Left cardiac atrium (tissue), 4 donors: ENCODE measurements at regions of chr6 and their contacts with region 1.

Region 1: DNA sequence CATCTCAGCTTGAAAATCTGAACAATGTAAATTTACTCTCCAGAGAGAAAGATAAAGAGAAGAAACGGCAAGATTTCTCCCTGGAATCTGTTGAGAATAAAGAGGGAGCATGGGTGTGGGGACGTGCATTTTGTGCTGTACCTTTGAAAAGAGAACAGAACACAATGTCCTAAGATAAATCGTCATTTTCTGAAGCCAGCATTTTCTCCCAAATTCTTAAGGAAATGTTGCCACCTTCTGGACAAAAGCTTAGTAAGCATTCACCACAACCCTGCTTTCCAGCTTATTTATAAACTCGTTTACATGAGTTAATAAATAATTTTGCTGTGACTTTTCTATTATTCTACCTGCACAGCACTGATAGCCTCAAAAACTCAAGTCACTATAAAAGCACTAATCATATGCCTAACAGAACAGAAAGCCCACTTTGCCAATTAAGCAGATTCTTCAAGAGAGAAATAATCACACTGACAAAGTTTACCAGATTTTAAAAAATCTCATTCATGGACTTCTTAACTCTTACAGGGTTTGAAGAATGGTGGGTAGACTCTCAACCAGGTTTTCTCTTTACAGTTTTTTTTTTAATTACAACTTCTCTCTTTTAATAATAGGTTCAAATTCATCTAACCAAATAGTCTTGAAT is 155.8 kb downstream of the MBOAT1 start:
- DNase-seq: no peak
- ATAC-seq: peak; percentile 8 to 26

Region 2: DNA sequence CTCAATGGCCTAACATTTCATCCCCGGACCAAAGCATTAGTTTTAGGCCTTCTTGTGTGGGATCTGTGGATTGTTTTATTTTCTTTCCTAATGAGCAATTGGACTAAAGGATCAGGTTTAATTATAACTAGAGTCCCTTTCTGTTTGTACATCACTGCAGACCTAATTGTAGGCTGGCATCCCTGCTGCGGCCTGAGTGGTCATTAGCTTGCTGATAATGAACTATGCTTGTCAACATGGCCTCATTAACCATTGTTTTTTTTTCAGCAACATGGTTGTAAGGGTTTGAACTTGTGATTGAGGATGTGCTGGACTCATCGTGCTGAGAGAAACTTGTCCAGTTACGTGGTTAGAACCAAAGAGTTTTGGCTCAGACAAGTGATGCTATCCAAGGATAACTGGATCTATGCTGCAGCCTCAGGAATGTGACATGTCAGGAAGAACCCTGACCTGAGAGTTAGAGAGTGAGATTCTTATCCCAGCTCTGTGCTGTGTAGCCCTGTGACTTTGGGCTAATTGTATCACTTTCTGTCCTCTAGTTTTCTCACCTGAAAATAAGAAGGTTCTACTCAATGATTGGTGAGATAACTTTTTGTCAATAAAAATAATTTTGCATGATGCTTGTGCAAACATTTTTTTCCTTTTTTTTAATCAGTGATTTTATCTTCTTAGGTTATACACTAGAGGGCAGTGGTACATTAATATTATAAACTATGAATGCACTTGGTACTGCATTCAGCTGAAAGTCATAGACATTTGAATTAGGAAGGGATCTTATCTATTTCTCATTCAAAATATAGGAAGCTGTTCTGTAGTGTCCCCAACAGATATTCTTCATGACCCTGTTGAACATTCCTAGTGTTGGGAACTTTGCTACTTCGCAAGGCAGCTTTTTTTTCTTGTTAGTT is 1528.4 kb before region 1 on chr6:
- intact Hi-C with region 1: loop called in 1 of 2 experiments (anchors 5 kb)
- DNase-seq: no peak
- ATAC-seq: no peak

Region 3: DNA sequence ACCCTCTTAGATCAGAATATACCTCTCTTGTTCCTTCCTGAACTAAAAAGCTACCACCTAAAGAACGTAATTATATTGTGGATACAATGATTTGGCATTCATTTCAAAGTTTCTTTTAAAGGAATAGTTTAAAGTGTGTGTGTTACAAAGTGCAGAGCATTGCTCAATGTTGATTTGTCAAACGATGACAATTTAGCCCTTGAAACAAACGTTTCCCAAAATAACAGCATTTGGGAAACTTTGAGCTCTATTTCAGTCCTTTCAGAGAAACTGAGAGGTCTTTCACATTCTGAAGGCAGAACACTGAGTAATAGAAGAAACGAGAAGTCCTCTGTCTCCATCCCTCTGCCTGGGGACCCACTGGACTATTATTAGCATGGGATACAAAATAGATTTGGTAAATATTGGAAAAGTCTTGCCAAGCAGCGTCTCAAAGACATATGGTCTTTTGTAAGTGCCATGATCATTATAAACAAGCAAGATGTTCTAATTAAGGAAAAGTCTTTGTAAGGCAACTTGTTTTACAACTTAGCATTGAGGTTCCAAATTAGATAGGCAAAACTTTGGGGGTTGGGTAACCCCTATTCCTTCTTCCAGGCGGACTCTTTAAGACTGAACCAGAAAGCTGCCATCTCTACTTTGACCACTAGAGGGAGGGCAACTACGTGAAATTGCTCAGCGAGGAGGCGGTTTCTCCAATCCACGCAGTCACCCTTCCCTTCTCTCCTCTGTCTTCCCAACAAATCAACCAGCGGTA is 1460.5 kb before region 1 on chr6:
- intact Hi-C with region 1: loop called in 1 of 2 experiments (anchors 5 kb)
- DNase-seq: peak; percentile 44
- ATAC-seq: peak; percentile 87 to 92

Region 4: DNA sequence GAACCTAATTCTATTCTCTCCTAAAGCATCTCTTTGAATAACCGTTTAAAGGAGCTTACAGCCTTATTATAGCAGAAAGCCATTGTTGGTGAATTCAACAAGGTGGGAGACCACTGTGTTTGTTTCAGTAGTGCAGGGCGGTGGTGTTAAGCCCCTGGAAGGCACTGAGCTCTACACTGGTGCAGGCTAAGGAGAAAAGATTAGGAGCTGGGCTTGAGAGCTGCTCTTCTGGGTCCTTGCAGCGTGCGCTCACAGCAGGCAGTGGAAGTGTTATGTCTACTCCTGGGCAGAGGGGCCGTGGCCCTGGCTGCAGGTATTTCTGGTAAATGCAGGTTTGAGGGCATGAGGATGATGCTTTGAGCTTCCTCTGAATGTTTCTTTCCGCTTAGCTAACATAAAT is 1308.2 kb before region 1 on chr6:
- intact Hi-C with region 1: loop called in 1 of 2 experiments (anchors 5 kb)
- DNase-seq: no peak
- ATAC-seq: no peak

Region 5: GRCh38 chr6:18990059-18990978 is 1066.2 kb before region 1 on chr6:
- intact Hi-C with region 1: loop called in 1 of 2 experiments (anchors 10 kb)
- DNase-seq: peak; percentile 83
- ATAC-seq: peak; percentile 67 to 71

Region 6: GRCh38 chr6:19892260-19892659 is 164.2 kb before region 1 on chr6:
- intact Hi-C with region 1: no loop called
- DNase-seq: no peak
- ATAC-seq: no peak

Region 7: DNA sequence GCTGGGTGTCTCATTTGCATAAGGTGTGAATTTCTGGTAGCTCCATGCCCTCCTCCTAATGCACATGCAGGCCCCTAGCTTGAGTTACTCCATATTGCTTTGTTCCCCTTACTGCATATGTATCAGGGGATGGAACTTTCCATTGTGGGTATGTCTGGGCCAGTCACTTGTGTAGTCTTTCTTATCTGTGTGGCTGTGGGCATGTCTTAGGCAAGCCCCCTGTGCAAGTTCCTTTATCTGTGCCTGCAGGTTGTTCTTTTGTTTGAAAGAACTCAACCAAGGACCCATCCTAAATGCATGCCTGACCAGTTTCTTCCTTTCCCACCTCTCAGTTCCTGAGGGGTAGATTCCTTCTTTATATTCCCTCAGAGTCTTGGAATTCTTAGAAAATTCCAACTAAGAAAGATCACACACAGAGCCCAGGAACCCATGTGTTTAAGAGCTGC is 132.2 kb after region 1 on chr6:
- intact Hi-C with region 1: no loop called
- DNase-seq: no peak
- ATAC-seq: no peak